ENCODE measurements at regions of chr2 and their contacts with region 1.

Region 1: DNA sequence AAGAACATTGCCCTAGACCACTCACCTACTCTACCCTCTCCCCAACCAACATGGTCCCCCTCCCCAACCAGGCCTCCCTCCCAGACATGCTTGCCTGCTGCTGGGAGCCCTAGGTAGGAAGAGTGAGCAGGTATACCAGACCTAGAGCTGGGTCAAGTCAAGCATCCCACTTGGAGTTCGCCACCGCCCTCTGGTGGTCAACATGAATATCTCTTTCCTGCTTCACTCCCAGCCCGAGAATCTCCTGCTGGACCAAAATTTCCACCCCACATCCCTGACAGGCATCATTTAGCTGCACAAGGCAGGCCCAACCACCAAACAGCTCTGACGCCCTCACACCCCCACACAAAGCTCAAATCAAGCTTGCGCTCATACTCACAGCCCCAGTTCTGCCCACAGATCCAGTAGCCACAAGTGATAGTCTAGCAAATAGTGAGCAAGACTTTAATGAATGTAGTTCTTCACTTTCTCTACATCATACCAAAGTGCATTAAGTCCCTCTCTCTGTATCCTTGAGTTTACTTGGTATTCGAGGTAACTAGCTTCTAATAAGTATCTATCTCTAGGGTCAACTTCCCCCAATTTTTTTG is 116.0 kb downstream of the TNS1 start:
- DNase-seq: peak; percentile 55
- H3K4me3 ChIP-seq: no peak overlapping the region
- H3K27ac ChIP-seq: no peak overlapping the region
- H3K27me3 ChIP-seq: no peaks in the 10 kb centered on the region
- CTCF ChIP-seq: peak; percentile 83

Region 2: DNA sequence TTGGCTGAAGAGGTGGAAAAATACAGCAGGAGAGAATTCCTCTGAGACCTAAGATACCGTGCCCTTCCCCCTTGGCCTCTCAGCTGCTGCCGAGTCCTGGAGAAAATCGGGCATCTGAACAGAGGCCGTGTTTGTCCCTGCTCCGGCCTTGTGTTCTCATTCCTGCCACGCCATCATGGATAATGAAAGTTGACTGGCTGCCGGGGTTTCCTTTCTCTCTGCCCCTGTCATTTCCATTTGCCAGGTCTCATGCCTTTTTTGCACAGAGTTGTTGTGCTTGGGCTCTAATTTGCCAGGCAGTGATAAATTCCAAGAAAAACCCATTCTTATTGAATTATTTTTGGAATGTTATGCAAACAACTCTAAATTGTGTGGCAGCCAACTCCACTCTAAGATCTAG is 530.0 kb before region 1 on chr2:
- CTCF ChIA-PET with region 1: no interaction called
- POLR2A ChIA-PET with region 1: no interaction called
- DNase-seq: no peak
- H3K4me3 ChIP-seq: no peak overlapping the region
- H3K27ac ChIP-seq: no peak overlapping the region
- H3K27me3 ChIP-seq: no peaks in the 10 kb centered on the region
- CTCF ChIP-seq: no peak

Region 3: DNA sequence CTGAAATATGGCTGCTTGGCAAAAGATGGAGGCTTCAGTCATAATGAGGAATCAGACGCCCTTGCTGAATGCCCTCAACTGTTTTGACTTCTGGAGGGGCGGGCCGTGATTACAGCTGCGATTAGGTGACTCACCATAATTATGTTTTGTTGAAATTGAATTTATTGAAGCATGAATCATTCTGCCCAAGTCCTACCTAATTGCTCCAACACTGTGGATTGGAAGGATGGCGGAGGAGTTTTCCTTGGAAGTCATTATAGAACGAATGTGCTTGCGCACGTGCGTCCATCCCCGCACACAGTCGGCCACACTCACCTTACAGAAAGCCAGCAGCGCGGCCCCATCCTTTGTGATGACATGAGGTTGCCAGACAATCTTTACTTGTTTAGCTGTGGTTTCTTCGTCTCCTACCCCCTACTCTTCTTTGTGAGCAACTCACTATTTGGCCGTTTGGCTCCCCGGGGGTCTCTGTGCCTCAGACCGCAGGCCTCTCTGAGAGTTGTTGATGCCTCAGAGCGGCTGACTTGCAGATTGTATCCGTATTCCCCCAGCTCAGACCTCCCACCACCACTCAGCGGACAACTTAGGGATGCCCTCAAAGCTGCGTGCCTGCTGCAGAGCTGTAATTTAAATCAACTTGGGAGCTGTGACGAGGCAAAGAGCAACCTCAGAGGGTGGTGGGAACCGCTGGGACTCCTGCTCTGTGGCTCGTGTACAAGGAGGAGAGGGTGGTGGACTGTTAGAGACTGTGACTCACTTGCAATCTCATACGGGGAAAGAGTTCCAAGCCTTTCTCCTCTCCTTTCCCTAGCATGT is 397.5 kb before region 1 on chr2:
- CTCF ChIA-PET with region 1: no interaction called
- POLR2A ChIA-PET with region 1: no interaction called
- DNase-seq: no peak
- H3K4me3 ChIP-seq: no peak overlapping the region
- H3K27ac ChIP-seq: no peak overlapping the region
- H3K27me3 ChIP-seq: no peaks in the 10 kb centered on the region
- CTCF ChIP-seq: no peak

Region 4: GRCh38 chr2:217729421-217730053 is 157.3 kb before region 1 on chr2:
- CTCF ChIA-PET with region 1: no interaction called
- POLR2A ChIA-PET with region 1: no interaction called
- DNase-seq: no peak
- H3K4me3 ChIP-seq: no peak overlapping the region
- H3K27ac ChIP-seq: no peak overlapping the region
- H3K27me3 ChIP-seq: no peaks in the 10 kb centered on the region
- CTCF ChIP-seq: no peak

Region 5: GRCh38 chr2:217816396-217816869 is 70.4 kb before region 1 on chr2:
- CTCF ChIA-PET with region 1: interaction called, 10 read pairs
- POLR2A ChIA-PET with region 1: no interaction called
- DNase-seq: no peak
- H3K4me3 ChIP-seq: no peak overlapping the region
- H3K27ac ChIP-seq: no peak overlapping the region
- H3K27me3 ChIP-seq: no peaks in the 10 kb centered on the region
- CTCF ChIP-seq: no peak

Region 6: GRCh38 chr2:217868911-217869334 is 17.9 kb before region 1 on chr2:
- CTCF ChIA-PET with region 1: interaction called, 30 read pairs
- POLR2A ChIA-PET with region 1: no interaction called
- DNase-seq: no peak
- H3K4me3 ChIP-seq: no peak overlapping the region
- H3K27ac ChIP-seq: no peak overlapping the region
- H3K27me3 ChIP-seq: no peaks in the 10 kb centered on the region
- CTCF ChIP-seq: no peak

Region 7: GRCh38 chr2:217899231-217900009 is 12.6 kb after region 1 on chr2:
- CTCF ChIA-PET with region 1: interaction called, 11 read pairs
- POLR2A ChIA-PET with region 1: no interaction called
- DNase-seq: peak; percentile 59
- H3K4me3 ChIP-seq: 0 out of 2 replicates have a peak overlapping the region, but pooled peaks have one; percentile 12
- H3K27ac ChIP-seq: peak overlapping the region; percentile 61
- H3K27me3 ChIP-seq: no peaks in the 10 kb centered on the region
- CTCF ChIP-seq: peak; percentile 81

Region 8: DNA sequence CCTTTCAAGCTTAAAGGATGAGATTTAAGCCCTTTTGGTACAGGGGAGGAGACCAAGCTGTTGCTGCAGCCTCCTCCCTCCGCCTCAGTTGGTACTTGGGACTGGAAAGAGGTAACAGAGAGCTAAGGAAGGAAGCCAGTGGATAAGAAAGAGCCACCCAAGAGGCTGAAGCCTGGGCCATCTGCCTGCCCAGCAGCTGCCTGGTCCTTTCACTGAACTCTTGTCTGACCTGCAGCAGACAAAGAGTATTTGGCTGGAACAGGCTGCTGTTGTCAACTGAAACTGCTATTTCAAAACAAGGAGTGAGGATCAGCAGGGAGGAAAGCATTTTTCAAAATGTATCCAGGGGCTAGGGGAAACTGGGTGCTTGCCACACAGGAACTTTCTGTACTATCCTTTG is 85.7 kb after region 1 on chr2:
- CTCF ChIA-PET with region 1: interaction called, 10 read pairs
- POLR2A ChIA-PET with region 1: no interaction called
- DNase-seq: no peak
- H3K4me3 ChIP-seq: no peak overlapping the region
- H3K27ac ChIP-seq: no peak overlapping the region
- H3K27me3 ChIP-seq: no peaks in the 10 kb centered on the region
- CTCF ChIP-seq: no peak

Region 9: DNA sequence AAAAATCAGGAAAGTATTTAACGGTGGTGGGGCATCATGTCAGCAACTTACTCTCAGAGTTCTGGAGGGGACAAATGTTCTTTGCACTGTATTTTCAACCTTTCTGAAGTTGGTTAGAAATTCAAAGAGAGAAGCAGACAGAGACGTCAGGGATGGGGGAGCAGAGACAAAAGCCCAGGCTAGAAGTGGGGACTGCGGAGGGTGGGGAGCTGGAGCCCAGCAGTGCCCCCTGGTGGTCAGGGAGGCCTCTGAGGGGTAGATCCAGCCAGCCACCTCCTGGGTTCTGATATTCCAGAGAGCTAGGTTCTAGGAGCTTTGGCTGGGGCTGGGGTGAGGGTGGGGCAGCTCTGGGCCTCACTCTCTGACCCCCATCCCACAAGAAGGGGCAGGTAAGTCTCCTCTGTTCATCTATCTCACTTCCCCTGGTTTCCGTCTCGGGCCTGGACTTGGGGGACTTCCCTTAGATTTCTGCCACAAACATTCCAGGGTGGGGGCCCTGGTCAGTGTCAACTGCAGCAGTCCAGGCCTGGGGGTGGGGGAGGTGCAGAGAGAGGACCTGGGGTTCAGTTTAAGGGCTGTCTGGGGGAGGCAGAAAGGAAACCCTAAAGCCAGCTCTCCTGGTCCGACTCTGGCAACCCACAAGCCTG is 107.1 kb after region 1 on chr2:
- CTCF ChIA-PET with region 1: interaction called, 16 read pairs
- POLR2A ChIA-PET with region 1: no interaction called
- DNase-seq: no peak
- H3K4me3 ChIP-seq: no peak overlapping the region
- H3K27ac ChIP-seq: peak overlapping the region; percentile 88
- H3K27me3 ChIP-seq: no peaks in the 10 kb centered on the region
- CTCF ChIP-seq: peak; percentile 77

Region 10: DNA sequence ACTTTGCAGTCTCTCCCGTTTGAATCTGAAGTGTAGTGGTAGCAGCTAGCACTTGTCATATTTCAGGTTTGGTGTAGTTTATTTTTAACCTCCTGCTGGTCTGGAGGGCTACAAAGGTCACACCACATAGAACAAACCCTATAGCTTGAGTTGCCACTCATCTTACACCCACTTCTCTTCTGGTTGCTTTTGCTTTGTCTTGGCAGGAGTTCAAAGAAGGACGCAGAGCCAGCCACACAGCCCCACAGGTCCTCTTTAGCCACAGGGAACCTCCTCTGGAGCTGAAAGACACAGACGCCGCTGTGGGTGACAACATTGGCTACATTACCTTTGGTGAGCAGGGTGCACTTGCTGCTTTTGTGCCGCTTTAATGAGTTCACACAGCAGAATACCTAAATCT is 358.4 kb after region 1 on chr2:
- CTCF ChIA-PET with region 1: no interaction called
- POLR2A ChIA-PET with region 1: no interaction called
- DNase-seq: no peak
- H3K4me3 ChIP-seq: no peak overlapping the region
- H3K27ac ChIP-seq: no peak overlapping the region
- H3K27me3 ChIP-seq: no peaks in the 10 kb centered on the region
- CTCF ChIP-seq: no peak